Sigmoid colon (tissue), 7 donors: ENCODE measurements at regions of chr1 and their contacts with region 1.

Region 1: GRCh38 chr1:24415334-24415909 is at the start of gene NIPAL3:
- DNase-seq: peak; percentile 99
- H3K4me3 ChIP-seq: peak within 1 kb of the TSS; percentile 45 to 65 (median 58)
- H3K27ac ChIP-seq: peak within 1 kb of the TSS; percentile 39 to 84 (median 64)
- H3K4me1 ChIP-seq: peaks cover 0 to 50% (median 27%) of the 10 kb centered on the region in 4 donors
- H3K27me3 ChIP-seq: no peaks in the 10 kb centered on the region
- CTCF ChIP-seq: peak; percentile 33 to 83 (median 72)
- EP300 ChIP-seq: no peak
- POLR2A ChIP-seq: peak in 1 of 2 donors; percentile 16
- total RNA-seq, gene NIPAL3: 23.7 to 53.2 (median 42.3) TPM

Region 2: GRCh38 chr1:24502709-24503058 is 87.3 kb after region 1 on chr1 and contains the start of gene RCAN3:
- intact Hi-C with region 1: loop called (anchors 5 kb)
- DNase-seq: peak; percentile 85
- H3K4me3 ChIP-seq: peak within 1 kb of the TSS; percentile 55 to 88 (median 74)
- H3K27ac ChIP-seq: peak within 1 kb of the TSS; percentile 77 to 86 (median 81)
- H3K4me1 ChIP-seq: peaks cover 0 to 12% (median 6%) of the 10 kb centered on the region in 4 donors
- H3K27me3 ChIP-seq: no peaks in the 10 kb centered on the region
- CTCF ChIP-seq: no peak
- EP300 ChIP-seq: no peak
- POLR2A ChIP-seq: no peak
- total RNA-seq, gene RCAN3: 4.1 to 19.1 (median 10.7) TPM